Body of pancreas (tissue), 4 donors: ENCODE measurements at regions of chr18 and their contacts with region 1.

Region 1: DNA sequence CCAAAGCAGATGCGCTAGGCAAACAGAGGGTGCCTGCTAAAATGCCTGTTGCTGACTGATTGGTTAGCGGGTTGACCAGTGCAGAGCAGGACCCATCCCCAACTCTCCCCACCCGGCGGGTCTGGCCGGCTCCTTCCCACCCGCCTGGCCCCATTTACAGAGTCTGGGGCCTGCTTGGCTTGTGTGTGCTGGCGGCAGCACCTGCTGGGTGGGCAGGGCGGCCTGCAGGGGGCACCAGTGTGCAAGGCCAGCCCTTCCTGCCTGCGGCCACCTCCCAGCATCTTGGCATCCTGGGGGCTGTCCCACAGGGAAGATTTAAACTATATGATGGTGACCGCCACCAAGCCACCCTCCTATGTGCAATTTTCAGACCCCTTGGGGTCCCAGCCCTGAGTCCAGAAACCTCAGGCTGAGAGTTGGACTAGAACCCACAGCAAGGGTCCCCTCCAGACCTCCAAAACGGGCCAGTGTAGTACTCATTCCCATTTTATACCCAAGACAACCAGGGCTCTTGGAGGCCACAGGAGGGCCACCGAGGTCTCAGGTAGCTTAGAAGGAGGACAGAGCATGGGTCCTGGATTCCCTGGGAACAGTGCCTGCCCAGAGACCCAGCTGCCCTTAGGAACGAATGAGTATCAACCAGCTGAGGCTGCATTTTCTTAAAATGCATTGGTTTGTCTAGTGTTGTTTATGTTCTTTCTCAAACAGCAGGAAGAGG is 173.6 kb downstream of the SMAD7 start:
- DNase-seq: peak; percentile 50 to 73 (median 62)
- ATAC-seq: peak; percentile 45
- H3K4me3 ChIP-seq: no peak overlapping the region
- H3K27ac ChIP-seq: no peak overlapping the region
- H3K4me1 ChIP-seq: peaks cover 18% of the 10 kb centered on the region
- H3K27me3 ChIP-seq: no peaks in the 10 kb centered on the region
- CTCF ChIP-seq: peak; percentile 75 to 90 (median 82)
- POLR2A ChIP-seq: no peak

Region 2: GRCh38 chr18:48949606-48950470 is 172.7 kb after region 1 on chr18:
- intact Hi-C with region 1: loop called (anchors 5 kb)
- DNase-seq: peak; percentile 47 to 66 (median 60)
- ATAC-seq: peak; percentile 13
- H3K4me3 ChIP-seq: peak overlapping the region; percentile 53
- H3K27ac ChIP-seq: peak overlapping the region; percentile 44 to 99 (median 88)
- H3K4me1 ChIP-seq: peaks cover 43% of the 10 kb centered on the region
- H3K27me3 ChIP-seq: no peaks in the 10 kb centered on the region
- CTCF ChIP-seq: peak in 3 of 7 experiments; percentile 11 to 53 (median 49)
- POLR2A ChIP-seq: peak; percentile 12 to 55 (median 26)

Region 3: GRCh38 chr18:48975649-48976204 is 198.5 kb after region 1 on chr18:
- intact Hi-C with region 1: loop called (anchors 10 kb)
- DNase-seq: peak; percentile 76 to 84 (median 78)
- ATAC-seq: peak; percentile 93
- H3K4me3 ChIP-seq: peak overlapping the region; percentile 30 to 57
- H3K27ac ChIP-seq: peak overlapping the region; percentile 71 to 92 (median 88)
- H3K4me1 ChIP-seq: peaks cover 15% of the 10 kb centered on the region
- H3K27me3 ChIP-seq: no peaks in the 10 kb centered on the region
- CTCF ChIP-seq: peak in 2 of 7 experiments; percentile 32 to 41
- POLR2A ChIP-seq: peak; percentile 38 to 64 (median 52)

Region 4: GRCh38 chr18:49189772-49190171 is 412.6 kb after region 1 on chr18:
- intact Hi-C with region 1: loop called (anchors 10 kb)
- DNase-seq: no peak
- ATAC-seq: no peak
- H3K4me3 ChIP-seq: no peak overlapping the region
- H3K27ac ChIP-seq: no peak overlapping the region
- H3K4me1 ChIP-seq: no peaks in the 10 kb centered on the region
- H3K27me3 ChIP-seq: no peaks in the 10 kb centered on the region
- CTCF ChIP-seq: no peak
- POLR2A ChIP-seq: no peak

Region 5: DNA sequence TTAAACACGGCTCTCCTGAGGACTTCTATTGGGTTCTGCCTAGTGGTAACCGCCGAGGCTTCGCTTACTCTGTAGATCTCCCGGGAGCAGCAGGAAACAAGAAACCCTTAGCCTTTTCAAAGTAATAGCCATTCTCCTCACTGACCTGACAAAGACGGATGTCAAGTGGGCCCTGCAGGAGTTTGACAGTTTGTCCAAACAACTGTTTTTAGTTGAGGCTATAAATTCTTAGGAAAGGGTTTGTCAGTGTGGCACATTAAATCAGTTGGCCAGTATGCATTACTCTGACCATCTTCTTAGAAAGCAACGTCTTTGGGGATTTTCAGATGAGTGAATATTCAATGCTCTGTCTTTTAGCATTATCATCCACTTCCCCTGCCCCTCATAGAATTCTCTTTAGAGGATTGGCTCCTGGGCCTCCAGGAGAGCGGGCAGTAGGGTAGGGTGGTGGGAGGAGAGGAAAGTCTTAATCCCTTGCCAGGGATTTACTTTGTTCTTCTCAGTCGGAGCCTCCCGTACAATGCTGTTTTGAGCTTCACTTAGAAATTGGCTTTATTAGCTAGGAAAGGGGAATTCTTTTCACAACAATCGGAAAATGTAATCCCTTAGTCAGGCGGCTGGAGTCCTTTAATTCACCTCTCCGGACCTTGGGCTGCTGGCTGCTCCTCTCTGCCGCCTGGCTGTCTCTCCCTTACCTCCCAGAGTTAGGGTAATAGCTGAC is 723.2 kb after region 1 on chr18:
- intact Hi-C with region 1: no loop called
- DNase-seq: no peak
- ATAC-seq: no peak
- H3K4me3 ChIP-seq: no peak overlapping the region
- H3K27ac ChIP-seq: no peak overlapping the region
- H3K4me1 ChIP-seq: no peaks in the 10 kb centered on the region
- H3K27me3 ChIP-seq: no peaks in the 10 kb centered on the region
- CTCF ChIP-seq: no peak
- POLR2A ChIP-seq: no peak